CD4-positive, alpha-beta T cell (primary cell): ENCODE measurements at regions of chr2 and their contacts with region 1.

Region 1: GRCh38 chr2:231104115-231104713 is 20.6 kb downstream of the HTR2B start:
- DNase-seq: peak; percentile 9 to 71 (median 51)
- ATAC-seq: peak; percentile 99
- H3K4me3 ChIP-seq: no peak overlapping the region
- H3K4me3 Mint-ChIP-seq: no peak overlapping the region
- H3K27ac ChIP-seq: no peak overlapping the region
- H3K27ac Mint-ChIP-seq: no peak overlapping the region
- H3K4me1 ChIP-seq: no peaks in the 10 kb centered on the region
- H3K4me1 Mint-ChIP-seq: peaks cover 5% of the 10 kb centered on the region
- H3K27me3 ChIP-seq: no peaks in the 10 kb centered on the region
- H3K27me3 Mint-ChIP-seq: no peaks in the 10 kb centered on the region
- CTCF ChIP-seq: peak; percentile 81

Region 2: GRCh38 chr2:231146665-231147064 is 42.5 kb after region 1 on chr2:
- CTCF ChIA-PET with region 1: no interaction called
- POLR2A ChIA-PET with region 1: no interaction called
- intact Hi-C with region 1: loop called in 1 of 2 experiments (anchors 5 kb)
- DNase-seq: no peak
- ATAC-seq: no peak
- H3K4me3 ChIP-seq: no peak overlapping the region
- H3K4me3 Mint-ChIP-seq: no peak overlapping the region
- H3K27ac ChIP-seq: no peak overlapping the region
- H3K27ac Mint-ChIP-seq: no peak overlapping the region
- H3K4me1 ChIP-seq: no peaks in the 10 kb centered on the region
- H3K4me1 Mint-ChIP-seq: no peaks in the 10 kb centered on the region
- H3K27me3 ChIP-seq: no peaks in the 10 kb centered on the region
- H3K27me3 Mint-ChIP-seq: no peaks in the 10 kb centered on the region
- CTCF ChIP-seq: no peak

Region 3: GRCh38 chr2:231399853-231400680 is 295.9 kb after region 1 on chr2:
- CTCF ChIA-PET with region 1: no interaction called
- POLR2A ChIA-PET with region 1: no interaction called
- intact Hi-C with region 1: loop called in 1 of 2 experiments (anchors 2 kb)
- DNase-seq: no peak
- ATAC-seq: no peak
- H3K4me3 ChIP-seq: no peak overlapping the region
- H3K4me3 Mint-ChIP-seq: no peak overlapping the region
- H3K27ac ChIP-seq: no peak overlapping the region
- H3K27ac Mint-ChIP-seq: no peak overlapping the region
- H3K4me1 ChIP-seq: peaks cover 6% of the 10 kb centered on the region
- H3K4me1 Mint-ChIP-seq: no peaks in the 10 kb centered on the region
- H3K27me3 ChIP-seq: peaks cover 16% of the 10 kb centered on the region in 2 experiments
- H3K27me3 Mint-ChIP-seq: peaks cover 25% of the 10 kb centered on the region
- CTCF ChIP-seq: no peak

Region 4: DNA sequence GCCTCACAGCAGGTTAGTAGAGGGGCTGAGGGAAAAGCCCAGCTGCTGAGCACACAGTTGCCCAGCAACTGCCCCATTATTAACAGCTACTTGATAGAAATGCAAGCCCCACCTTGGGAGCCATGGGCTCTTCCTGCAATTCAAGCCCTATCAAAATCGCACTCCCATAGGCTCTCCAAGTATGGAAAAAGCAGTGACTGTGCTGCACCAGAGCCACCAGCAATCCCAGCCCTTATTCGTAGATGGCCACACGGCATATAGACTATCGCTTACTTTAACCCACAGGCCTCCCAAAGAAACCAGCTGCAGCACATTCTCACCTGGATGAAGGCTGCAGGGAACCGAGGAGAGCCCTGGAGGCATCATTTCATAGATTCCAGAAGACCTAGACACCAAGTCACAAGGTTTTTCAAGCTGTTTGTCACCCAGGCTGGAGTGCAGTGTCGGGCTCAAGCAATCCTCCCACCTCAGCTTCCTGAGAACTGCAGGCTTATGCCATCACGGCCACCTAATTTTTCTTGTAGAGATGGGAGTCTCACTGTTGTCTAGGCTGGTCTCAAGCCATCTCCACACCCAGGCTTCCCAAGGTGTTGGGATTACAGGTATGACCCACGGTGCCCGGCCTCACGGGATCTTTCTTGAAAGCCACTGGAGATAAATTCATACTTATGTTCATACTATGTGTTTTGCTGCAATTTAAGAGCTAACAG is 348.7 kb after region 1 on chr2:
- CTCF ChIA-PET with region 1: interaction called, 16 read pairs
- POLR2A ChIA-PET with region 1: interaction called, 17 read pairs
- intact Hi-C with region 1: loop called (anchors 1 kb)
- DNase-seq: peak in 1 of 14 experiments; percentile 24
- ATAC-seq: no peak
- H3K4me3 ChIP-seq: no peak overlapping the region
- H3K4me3 Mint-ChIP-seq: peak overlapping the region; percentile 20
- H3K27ac ChIP-seq: no peak overlapping the region
- H3K27ac Mint-ChIP-seq: peak overlapping the region; percentile 82
- H3K4me1 ChIP-seq: peaks cover 8% of the 10 kb centered on the region
- H3K4me1 Mint-ChIP-seq: peaks cover 22% of the 10 kb centered on the region
- H3K27me3 ChIP-seq: no peaks in the 10 kb centered on the region
- H3K27me3 Mint-ChIP-seq: no peaks in the 10 kb centered on the region
- CTCF ChIP-seq: no peak